ENCODE measurements at regions of chr5 and their contacts with region 1.

Region 1: DNA sequence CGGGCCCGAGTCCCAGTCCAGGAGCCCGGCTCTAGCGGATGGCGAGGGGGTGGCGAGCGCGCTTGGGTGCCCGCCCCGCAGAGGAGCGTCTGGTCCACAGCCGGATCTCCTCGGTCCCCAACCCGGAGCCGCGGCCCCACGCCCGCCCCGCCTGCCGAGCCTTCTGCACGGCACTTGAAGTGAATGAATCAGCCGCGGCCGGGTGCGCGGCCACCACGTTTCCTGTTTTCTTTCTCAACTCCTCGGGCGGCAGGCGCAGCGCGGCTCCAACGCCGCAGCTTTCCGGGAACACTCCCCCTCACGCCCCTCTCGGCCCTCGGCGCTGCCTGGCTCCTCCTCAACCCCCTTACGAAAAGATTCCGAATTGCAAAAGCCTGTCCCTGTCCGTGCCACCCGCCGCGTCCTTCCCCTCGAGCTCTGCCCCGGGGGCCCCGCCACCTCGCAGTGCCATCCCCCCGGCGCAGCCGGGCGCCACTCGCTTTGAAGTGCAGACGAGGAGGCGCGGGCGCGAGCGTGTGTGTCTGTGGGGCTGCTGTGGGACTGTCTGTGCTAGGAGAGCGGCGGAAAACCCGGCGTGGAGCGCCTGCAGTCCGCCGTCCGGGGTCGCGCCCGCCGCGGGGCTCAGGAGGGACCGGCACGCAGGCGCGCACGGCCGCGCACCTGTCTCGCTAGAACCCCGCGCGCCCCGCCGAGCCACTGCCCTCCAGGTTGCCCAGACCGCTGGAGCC is 456.6 kb downstream of the RAB3C start:
- DNase-seq: peak; percentile 88
- H3K4me3 Mint-ChIP-seq: peak overlapping the region; percentile 88
- H3K27ac Mint-ChIP-seq: peak overlapping the region; percentile 95
- H3K4me1 Mint-ChIP-seq: peaks cover 50% of the 10 kb centered on the region
- H3K27me3 Mint-ChIP-seq: no peaks in the 10 kb centered on the region

Region 2: GRCh38 chr5:58751222-58751837 is 288.1 kb before region 1 on chr5:
- intact Hi-C with region 1: no loop called
- DNase-seq: no peak
- H3K4me3 Mint-ChIP-seq: no peak overlapping the region
- H3K27ac Mint-ChIP-seq: no peak overlapping the region
- H3K4me1 Mint-ChIP-seq: peaks cover 3% of the 10 kb centered on the region
- H3K27me3 Mint-ChIP-seq: peaks cover 17% of the 10 kb centered on the region

Region 3: DNA sequence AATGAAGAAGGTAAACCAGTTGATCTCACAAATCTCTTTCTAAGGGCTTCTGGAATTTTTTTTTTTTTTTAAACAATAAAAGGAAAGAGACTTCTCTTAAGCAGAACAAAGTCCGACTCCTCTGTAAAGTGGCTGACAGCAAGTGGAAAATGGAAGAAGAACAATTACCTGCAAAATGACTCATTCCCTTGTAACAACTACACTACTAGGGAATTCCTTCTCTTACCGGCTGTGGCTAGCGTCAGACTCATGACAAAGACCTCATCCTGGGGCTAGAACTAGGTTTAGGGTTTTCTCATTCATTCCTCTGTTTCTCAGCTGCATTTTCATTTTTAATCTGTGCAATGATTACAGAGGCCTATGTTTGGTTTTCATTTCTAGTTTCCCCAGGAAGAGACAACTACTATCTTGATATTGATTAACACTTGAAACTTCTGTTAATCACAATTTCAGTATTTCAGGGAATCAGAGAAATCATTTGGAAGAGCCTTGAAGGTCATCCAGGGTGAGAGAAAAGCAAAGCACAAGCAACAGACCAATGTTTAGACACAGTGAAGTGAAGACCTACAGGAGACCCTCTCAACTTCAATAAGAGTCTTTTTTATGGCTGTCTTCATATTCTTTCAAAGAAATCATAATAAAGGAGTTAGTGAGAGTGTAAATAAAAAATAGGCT is 18.7 kb before region 1 on chr5:
- intact Hi-C with region 1: loop called (anchors 1 kb)
- DNase-seq: no peak
- H3K4me3 Mint-ChIP-seq: peak overlapping the region; percentile 32
- H3K27ac Mint-ChIP-seq: peak overlapping the region; percentile 93
- H3K4me1 Mint-ChIP-seq: peaks cover 54% of the 10 kb centered on the region
- H3K27me3 Mint-ChIP-seq: no peaks in the 10 kb centered on the region

Region 4: DNA sequence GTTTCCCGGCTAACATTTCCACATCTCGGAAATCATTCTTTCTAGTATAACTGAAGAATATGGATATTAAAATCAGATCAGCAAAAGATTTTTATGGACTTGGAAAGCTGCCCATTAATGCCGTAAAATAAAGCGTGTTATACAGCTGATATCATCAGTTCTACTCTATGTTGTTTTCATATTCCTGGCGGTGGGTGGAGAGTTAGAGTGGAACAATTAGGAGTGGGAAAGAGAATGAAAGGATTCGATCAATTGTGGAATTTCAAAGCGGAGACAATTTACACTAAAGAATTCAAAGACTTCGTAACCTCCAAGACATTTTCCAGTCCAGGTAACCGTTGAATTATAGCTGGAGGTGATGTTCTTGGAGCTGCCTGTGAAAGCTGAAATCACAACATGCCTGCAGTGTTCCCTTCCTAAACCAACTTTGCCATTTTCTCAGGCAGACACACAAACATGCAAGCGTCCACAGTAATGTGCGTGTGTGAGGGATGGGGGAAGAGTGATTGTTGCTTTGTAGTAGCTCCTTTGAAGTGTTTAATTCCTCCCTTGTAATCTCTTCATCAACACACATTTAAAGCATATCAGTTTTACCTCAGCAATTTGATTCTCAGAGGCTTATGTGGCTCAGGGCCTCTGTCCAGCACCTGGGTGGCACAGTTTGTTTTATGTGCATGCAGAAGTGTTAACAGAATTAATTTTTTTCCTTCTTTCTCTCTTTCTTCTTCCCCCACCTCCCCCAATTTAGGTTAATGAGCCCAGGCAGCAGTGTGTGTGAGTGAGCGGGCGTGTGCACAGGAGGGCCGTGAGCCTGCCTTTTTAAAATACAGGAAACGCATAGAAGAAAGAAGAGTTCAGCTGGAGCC is 87.5 kb after region 1 on chr5:
- intact Hi-C with region 1: loop called (anchors 1 kb)
- DNase-seq: peak; percentile 34
- H3K4me3 Mint-ChIP-seq: no peak overlapping the region
- H3K27ac Mint-ChIP-seq: no peak overlapping the region
- H3K4me1 Mint-ChIP-seq: peaks cover 15% of the 10 kb centered on the region
- H3K27me3 Mint-ChIP-seq: no peaks in the 10 kb centered on the region

Region 5: GRCh38 chr5:59380350-59380951 is 341.0 kb after region 1 on chr5:
- intact Hi-C with region 1: loop called (anchors 10 kb)
- DNase-seq: no peak
- H3K4me3 Mint-ChIP-seq: no peak overlapping the region
- H3K27ac Mint-ChIP-seq: no peak overlapping the region
- H3K4me1 Mint-ChIP-seq: peaks cover 5% of the 10 kb centered on the region
- H3K27me3 Mint-ChIP-seq: peaks cover 5% of the 10 kb centered on the region